IMR-90 (cell line): ENCODE measurements at regions of chr5 and their contacts with region 1.

Region 1: GRCh38 chr5:172106511-172107356 is 81.3 kb downstream of the STK10 start:
- DNase-seq: no peak
- ATAC-seq: peak; percentile 31
- H3K4me3 ChIP-seq: 0 out of 2 replicates have a peak overlapping the region, but pooled peaks have one; percentile 14
- H3K27ac ChIP-seq: peak overlapping the region; percentile 71; the same call in 1 of the 2 replicates
- H3K4me1 ChIP-seq: peaks cover 38% of the 10 kb centered on the region
- H3K27me3 ChIP-seq: no peaks in the 10 kb centered on the region
- CTCF ChIP-seq: peak; percentile 77
- POLR2A ChIP-seq: no peak
- RAD21 ChIP-seq: peak; percentile 72

Region 2: DNA sequence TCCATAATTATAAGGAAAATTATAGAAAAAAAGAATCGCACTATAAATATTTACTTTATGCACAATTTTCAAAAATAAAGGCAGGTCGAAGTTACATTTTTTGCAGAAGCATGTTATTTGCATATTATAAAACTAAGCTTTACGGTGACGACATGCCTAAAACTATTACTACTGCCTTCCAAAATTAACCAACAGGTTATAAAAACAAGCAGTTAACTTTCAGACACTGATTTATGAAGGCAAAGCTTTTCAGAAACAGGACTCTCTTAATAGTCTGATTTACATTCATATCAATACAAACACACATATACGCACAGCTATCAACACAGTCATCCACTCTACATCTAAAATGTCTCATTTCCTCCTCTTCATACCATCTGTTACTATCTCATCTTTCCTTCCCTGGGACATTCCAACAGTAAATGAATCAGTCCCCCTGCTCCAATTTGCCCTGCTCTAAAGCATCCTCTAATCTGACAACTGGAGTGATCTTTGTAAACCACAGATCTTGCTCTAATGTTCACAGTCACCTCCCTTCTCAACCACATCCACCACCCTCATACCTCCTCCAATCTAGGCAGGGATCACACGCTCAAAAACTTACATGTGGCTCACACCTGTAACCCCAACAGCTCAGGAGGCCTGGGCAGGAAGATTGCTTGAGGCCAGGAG is 121.8 kb before region 1 on chr5:
- CTCF ChIA-PET with region 1: no interaction called
- POLR2A ChIA-PET with region 1: no interaction called
- dilution Hi-C with region 1: no loop called
- in situ Hi-C with region 1: no loop called
- intact Hi-C with region 1: no loop called
- DNase-seq: peak; percentile 98
- ATAC-seq: peak; percentile 95
- H3K4me3 ChIP-seq: no peak overlapping the region
- H3K27ac ChIP-seq: 0 out of 2 replicates have a peak overlapping the region, but pooled peaks have one; percentile 48
- H3K4me1 ChIP-seq: peaks cover 5% of the 10 kb centered on the region
- H3K27me3 ChIP-seq: no peaks in the 10 kb centered on the region
- CTCF ChIP-seq: no peak
- POLR2A ChIP-seq: no peak
- RAD21 ChIP-seq: no peak

Region 3: GRCh38 chr5:172044631-172045314 is 62.0 kb before region 1 on chr5:
- CTCF ChIA-PET with region 1: no interaction called
- POLR2A ChIA-PET with region 1: no interaction called
- dilution Hi-C with region 1: no loop called
- in situ Hi-C with region 1: no loop called
- intact Hi-C with region 1: no loop called
- DNase-seq: no peak
- ATAC-seq: no peak
- H3K4me3 ChIP-seq: no peak overlapping the region
- H3K27ac ChIP-seq: no peak overlapping the region
- H3K4me1 ChIP-seq: no peaks in the 10 kb centered on the region
- H3K27me3 ChIP-seq: no peaks in the 10 kb centered on the region
- CTCF ChIP-seq: no peak
- POLR2A ChIP-seq: no peak
- RAD21 ChIP-seq: no peak

Region 4: DNA sequence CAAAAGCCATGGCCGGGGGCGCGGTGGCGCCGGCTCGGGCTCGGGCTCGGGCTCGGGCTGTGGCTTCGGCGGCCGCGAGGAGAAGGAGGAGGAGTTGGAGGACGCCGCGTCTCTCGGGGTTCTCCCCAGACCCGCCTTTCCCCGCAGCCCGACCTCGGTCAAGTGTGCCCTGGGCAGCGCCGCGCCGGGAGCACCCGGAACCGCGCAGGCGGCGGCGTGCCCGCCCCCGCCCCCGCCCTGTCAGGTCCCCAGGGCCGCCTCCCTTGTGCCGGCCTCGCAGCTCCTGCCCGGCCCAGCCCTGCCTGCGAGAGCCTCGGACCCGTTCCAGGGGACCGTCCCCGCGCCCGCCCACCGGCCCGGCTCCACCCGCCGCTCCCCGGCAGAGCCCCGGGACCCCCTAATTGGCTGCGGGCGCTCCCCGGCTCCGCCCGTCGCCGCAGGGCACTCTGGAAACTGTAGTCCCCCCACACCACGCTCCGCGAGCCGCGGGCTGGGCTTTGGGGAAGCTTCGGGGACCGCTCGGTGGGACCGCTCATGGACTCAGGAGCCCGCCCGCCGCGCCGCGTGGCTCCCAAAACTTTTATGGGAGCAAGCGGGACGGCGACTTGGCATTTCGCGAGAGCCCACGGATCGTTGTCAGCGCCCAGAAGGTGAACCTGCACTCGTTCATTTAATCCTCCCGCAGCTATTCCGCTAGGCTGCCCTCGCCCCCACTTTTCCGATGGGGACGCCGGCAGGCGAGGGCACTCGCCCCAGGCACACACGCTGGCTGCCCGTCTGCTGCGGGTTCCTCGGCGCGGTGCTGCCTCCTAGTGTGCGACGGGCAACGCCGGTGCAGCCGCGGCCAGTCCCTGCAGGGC is 81.5 kb after region 1 on chr5 and contains the start of gene STK10:
- CTCF ChIA-PET with region 1: interaction called, 9 read pairs
- POLR2A ChIA-PET with region 1: interaction called, 11 read pairs
- dilution Hi-C with region 1: no loop called
- in situ Hi-C with region 1: loop called (anchors 5 kb)
- intact Hi-C with region 1: loop called (anchors 1 kb)
- DNase-seq: peak; percentile 87
- ATAC-seq: peak; percentile 90
- H3K4me3 ChIP-seq: peak within 1 kb of the TSS; percentile 98
- H3K27ac ChIP-seq: peak within 1 kb of the TSS; percentile 88
- H3K4me1 ChIP-seq: peaks cover 11% of the 10 kb centered on the region
- H3K27me3 ChIP-seq: no peaks in the 10 kb centered on the region
- CTCF ChIP-seq: peak; percentile 92
- POLR2A ChIP-seq: 0 out of 2 replicates have a peak, but pooled peaks have one; percentile 17
- RAD21 ChIP-seq: peak; percentile 96
- total RNA-seq, gene STK10: 15.4 and 16.4 TPM in 2 replicates

Region 5: DNA sequence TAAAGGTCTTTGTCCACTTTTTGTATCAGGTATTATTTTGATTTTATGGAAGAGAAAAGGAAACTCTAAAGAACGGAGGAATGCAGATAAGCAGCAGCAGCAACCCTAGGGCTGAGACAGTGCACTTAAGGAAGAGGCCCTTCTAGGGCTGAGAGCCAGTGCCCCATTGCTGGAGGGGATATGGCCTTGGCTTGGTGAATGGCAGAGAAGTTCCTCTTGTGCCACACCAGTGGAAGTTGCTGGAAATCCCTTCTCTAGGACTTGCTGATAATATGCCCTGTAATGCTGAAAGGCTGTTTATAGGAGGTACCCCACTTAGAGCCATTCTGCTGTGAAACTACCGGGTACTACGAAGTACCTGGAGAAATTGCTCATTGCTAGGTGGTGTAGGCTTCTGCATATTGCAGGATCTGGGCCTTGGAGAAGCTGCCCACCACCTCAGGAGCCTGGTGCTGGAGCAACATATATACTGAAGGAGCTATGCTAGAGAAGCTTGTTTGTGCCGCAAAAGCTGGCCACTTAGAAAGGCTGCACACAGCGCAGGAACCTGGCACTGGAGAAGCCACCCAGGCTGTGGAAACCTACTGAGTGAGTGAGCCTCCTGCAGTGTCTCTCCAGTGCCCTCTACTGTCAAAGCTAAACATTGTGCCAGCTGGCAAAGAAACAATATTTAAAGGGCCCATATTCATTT is 186.5 kb after region 1 on chr5:
- CTCF ChIA-PET with region 1: interaction called, 6 read pairs
- POLR2A ChIA-PET with region 1: no interaction called
- dilution Hi-C with region 1: no loop called
- in situ Hi-C with region 1: loop called (anchors 10 kb)
- intact Hi-C with region 1: loop called (anchors 1 kb)
- DNase-seq: peak; percentile 72
- ATAC-seq: peak; percentile 100
- H3K4me3 ChIP-seq: no peak overlapping the region
- H3K27ac ChIP-seq: no peak overlapping the region
- H3K4me1 ChIP-seq: no peaks in the 10 kb centered on the region
- H3K27me3 ChIP-seq: 0 out of 2 replicates have a peak, but pooled peaks cover 2% of the 10 kb centered on the region
- CTCF ChIP-seq: peak; percentile 93
- POLR2A ChIP-seq: no peak
- RAD21 ChIP-seq: peak; percentile 87

Region 6: GRCh38 chr5:172350212-172351181 is 243.8 kb after region 1 on chr5:
- CTCF ChIA-PET with region 1: no interaction called
- POLR2A ChIA-PET with region 1: no interaction called
- dilution Hi-C with region 1: no loop called
- in situ Hi-C with region 1: no loop called
- intact Hi-C with region 1: loop called (anchors 10 kb)
- DNase-seq: no peak
- ATAC-seq: no peak
- H3K4me3 ChIP-seq: no peak overlapping the region
- H3K27ac ChIP-seq: no peak overlapping the region
- H3K4me1 ChIP-seq: peaks cover 18% of the 10 kb centered on the region
- H3K27me3 ChIP-seq: no peaks in the 10 kb centered on the region
- CTCF ChIP-seq: no peak
- POLR2A ChIP-seq: no peak
- RAD21 ChIP-seq: no peak